ENCODE measurements at regions of chr2 and their contacts with region 1.

Region 1: GRCh38 chr2:30711646-30712085 is 95.6 kb downstream of the CAPN13 start:
- DNase-seq: peak; percentile 90
- ATAC-seq: peak; percentile 96
- H3K4me3 ChIP-seq: no peak overlapping the region
- H3K4me3 Mint-ChIP-seq: no peak overlapping the region
- H3K27ac ChIP-seq: no peak overlapping the region
- H3K27ac Mint-ChIP-seq: no peak overlapping the region
- H3K4me1 ChIP-seq: peaks cover 0 to 9% of the 10 kb centered on the region in 2 donors
- H3K4me1 Mint-ChIP-seq: peaks cover 9% of the 10 kb centered on the region
- H3K27me3 ChIP-seq: no peaks in the 10 kb centered on the region
- H3K27me3 Mint-ChIP-seq: no peaks in the 10 kb centered on the region
- CTCF ChIP-seq: peak; percentile 100

Region 2: GRCh38 chr2:30089171-30089570 is 622.5 kb before region 1 on chr2:
- CTCF ChIA-PET with region 1: interaction called, 41 read pairs
- POLR2A ChIA-PET with region 1: no interaction called
- intact Hi-C with region 1: loop called (anchors 1 kb)
- DNase-seq: no peak
- ATAC-seq: no peak
- H3K4me3 ChIP-seq: no peak overlapping the region
- H3K4me3 Mint-ChIP-seq: no peak overlapping the region
- H3K27ac ChIP-seq: no peak overlapping the region
- H3K27ac Mint-ChIP-seq: no peak overlapping the region
- H3K4me1 ChIP-seq: no peaks in the 10 kb centered on the region
- H3K4me1 Mint-ChIP-seq: peaks cover 3% of the 10 kb centered on the region
- H3K27me3 ChIP-seq: peaks cover 0 to 24% (median 10%) of the 10 kb centered on the region in 4 experiments
- H3K27me3 Mint-ChIP-seq: peaks cover 42% of the 10 kb centered on the region
- CTCF ChIP-seq: no peak

Region 3: DNA sequence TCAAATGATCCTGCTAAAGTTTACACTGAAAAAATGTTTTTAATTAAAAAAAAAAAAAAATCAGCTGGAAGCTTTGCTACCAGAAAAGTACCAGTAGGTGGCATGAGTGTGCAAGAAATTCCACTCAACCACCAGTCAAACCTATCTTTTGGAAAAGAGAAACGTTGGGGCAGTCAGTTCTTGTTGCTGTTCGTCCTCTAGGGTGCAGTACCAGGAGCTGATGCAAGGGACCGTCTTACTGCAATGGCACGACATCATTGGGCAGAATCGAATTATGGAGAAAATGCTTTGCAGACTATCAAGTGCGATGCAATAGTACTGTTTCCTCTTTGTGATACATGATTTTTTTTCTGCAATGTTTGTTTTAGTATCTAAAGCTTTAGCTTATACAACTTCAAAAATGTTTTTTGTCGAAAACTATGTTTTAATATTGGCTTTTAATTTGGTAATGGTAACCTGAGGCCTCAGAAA is 546.6 kb before region 1 on chr2:
- CTCF ChIA-PET with region 1: interaction called, 610 read pairs
- POLR2A ChIA-PET with region 1: interaction called, 21 read pairs
- intact Hi-C with region 1: loop called (anchors 1 kb)
- DNase-seq: peak; percentile 87
- ATAC-seq: peak; percentile 100
- H3K4me3 ChIP-seq: no peak overlapping the region
- H3K4me3 Mint-ChIP-seq: no peak overlapping the region
- H3K27ac ChIP-seq: no peak overlapping the region
- H3K27ac Mint-ChIP-seq: no peak overlapping the region
- H3K4me1 ChIP-seq: peaks cover 8% of the 10 kb centered on the region in 2 donors
- H3K4me1 Mint-ChIP-seq: peaks cover 16% of the 10 kb centered on the region
- H3K27me3 ChIP-seq: no peaks in the 10 kb centered on the region
- H3K27me3 Mint-ChIP-seq: no peaks in the 10 kb centered on the region
- CTCF ChIP-seq: peak; percentile 85

Region 4: GRCh38 chr2:30225131-30225762 is 486.4 kb before region 1 on chr2:
- CTCF ChIA-PET with region 1: interaction called, 148 read pairs
- POLR2A ChIA-PET with region 1: no interaction called
- intact Hi-C with region 1: no loop called
- DNase-seq: peak; percentile 74
- ATAC-seq: peak; percentile 68
- H3K4me3 ChIP-seq: peak overlapping the region; percentile 42 to 66 (median 64)
- H3K4me3 Mint-ChIP-seq: peak overlapping the region; percentile 95
- H3K27ac ChIP-seq: peak overlapping the region; percentile 88 to 91
- H3K27ac Mint-ChIP-seq: peak overlapping the region; percentile 100
- H3K4me1 ChIP-seq: peaks cover 41 to 53% of the 10 kb centered on the region in 2 donors
- H3K4me1 Mint-ChIP-seq: peaks cover 50% of the 10 kb centered on the region
- H3K27me3 ChIP-seq: no peaks in the 10 kb centered on the region
- H3K27me3 Mint-ChIP-seq: no peaks in the 10 kb centered on the region
- CTCF ChIP-seq: no peak

Region 5: GRCh38 chr2:30475542-30475941 is 236.1 kb before region 1 on chr2:
- CTCF ChIA-PET with region 1: interaction called, 19 read pairs
- POLR2A ChIA-PET with region 1: interaction called, 5 read pairs
- intact Hi-C with region 1: loop called (anchors 10 kb)
- DNase-seq: no peak
- ATAC-seq: no peak
- H3K4me3 ChIP-seq: no peak overlapping the region
- H3K4me3 Mint-ChIP-seq: no peak overlapping the region
- H3K27ac ChIP-seq: no peak overlapping the region
- H3K27ac Mint-ChIP-seq: no peak overlapping the region
- H3K4me1 ChIP-seq: peaks cover 8 to 17% of the 10 kb centered on the region in 2 donors
- H3K4me1 Mint-ChIP-seq: peaks cover 38% of the 10 kb centered on the region
- H3K27me3 ChIP-seq: no peaks in the 10 kb centered on the region
- H3K27me3 Mint-ChIP-seq: no peaks in the 10 kb centered on the region
- CTCF ChIP-seq: no peak

Region 6: DNA sequence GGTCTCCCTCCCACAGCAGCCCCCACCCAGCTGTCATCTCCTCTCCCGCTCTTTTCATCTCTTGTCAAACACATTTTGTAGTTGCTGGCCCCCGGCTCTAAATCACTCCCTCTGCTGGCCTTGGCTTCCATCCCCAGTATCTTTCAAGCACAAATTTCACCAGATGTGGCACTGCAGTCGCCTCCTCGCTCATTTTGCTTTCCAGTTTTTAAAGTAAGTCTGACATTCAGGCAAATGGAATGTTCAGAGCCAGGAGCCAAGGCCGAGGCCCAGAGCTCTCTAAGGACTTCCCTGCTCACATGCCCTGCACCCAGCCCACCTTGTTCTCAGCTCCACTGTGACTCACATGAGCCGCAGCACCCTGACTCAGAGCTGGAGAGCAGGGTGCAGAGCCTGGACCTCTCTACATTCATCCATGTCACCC is 268.2 kb after region 1 on chr2:
- CTCF ChIA-PET with region 1: no interaction called
- POLR2A ChIA-PET with region 1: no interaction called
- intact Hi-C with region 1: no loop called
- DNase-seq: no peak
- ATAC-seq: no peak
- H3K4me3 ChIP-seq: no peak overlapping the region
- H3K4me3 Mint-ChIP-seq: no peak overlapping the region
- H3K27ac ChIP-seq: no peak overlapping the region
- H3K27ac Mint-ChIP-seq: no peak overlapping the region
- H3K4me1 ChIP-seq: no peaks in the 10 kb centered on the region
- H3K4me1 Mint-ChIP-seq: no peaks in the 10 kb centered on the region
- H3K27me3 ChIP-seq: no peaks in the 10 kb centered on the region
- H3K27me3 Mint-ChIP-seq: no peaks in the 10 kb centered on the region
- CTCF ChIP-seq: no peak

Region 7: GRCh38 chr2:31170071-31170698 is 458.5 kb after region 1 on chr2:
- CTCF ChIA-PET with region 1: interaction called, 92 read pairs
- POLR2A ChIA-PET with region 1: no interaction called
- intact Hi-C with region 1: loop called (anchors 1 kb)
- DNase-seq: peak; percentile 74
- ATAC-seq: peak; percentile 94
- H3K4me3 ChIP-seq: no peak overlapping the region
- H3K4me3 Mint-ChIP-seq: no peak overlapping the region
- H3K27ac ChIP-seq: no peak overlapping the region
- H3K27ac Mint-ChIP-seq: peak overlapping the region; percentile 43
- H3K4me1 ChIP-seq: peaks cover 9 to 20% of the 10 kb centered on the region in 2 donors
- H3K4me1 Mint-ChIP-seq: peaks cover 27% of the 10 kb centered on the region
- H3K27me3 ChIP-seq: no peaks in the 10 kb centered on the region
- H3K27me3 Mint-ChIP-seq: peaks cover under 1% of the 10 kb centered on the region
- CTCF ChIP-seq: peak; percentile 95

Region 8: GRCh38 chr2:31523871-31524492 is 812.3 kb after region 1 on chr2:
- CTCF ChIA-PET with region 1: interaction called, 139 read pairs
- POLR2A ChIA-PET with region 1: no interaction called
- intact Hi-C with region 1: loop called (anchors 1 kb)
- DNase-seq: peak; percentile 64
- ATAC-seq: peak; percentile 64
- H3K4me3 ChIP-seq: no peak overlapping the region
- H3K4me3 Mint-ChIP-seq: no peak overlapping the region
- H3K27ac ChIP-seq: no peak overlapping the region
- H3K27ac Mint-ChIP-seq: no peak overlapping the region
- H3K4me1 ChIP-seq: no peaks in the 10 kb centered on the region
- H3K4me1 Mint-ChIP-seq: no peaks in the 10 kb centered on the region
- H3K27me3 ChIP-seq: peaks cover 0 to 6% (median 2%) of the 10 kb centered on the region in 4 experiments
- H3K27me3 Mint-ChIP-seq: peaks cover 37% of the 10 kb centered on the region
- CTCF ChIP-seq: peak; percentile 92

Measured in B cell (primary cell).